ENCODE measurements at regions of chr6 and their contacts with region 1.

Region 1: GRCh38 chr6:38671885-38672467 is 31.0 kb downstream of the GLO1 start:
- DNase-seq: peak; percentile 75
- CTCF ChIP-seq: peak; percentile 58

Region 2: DNA sequence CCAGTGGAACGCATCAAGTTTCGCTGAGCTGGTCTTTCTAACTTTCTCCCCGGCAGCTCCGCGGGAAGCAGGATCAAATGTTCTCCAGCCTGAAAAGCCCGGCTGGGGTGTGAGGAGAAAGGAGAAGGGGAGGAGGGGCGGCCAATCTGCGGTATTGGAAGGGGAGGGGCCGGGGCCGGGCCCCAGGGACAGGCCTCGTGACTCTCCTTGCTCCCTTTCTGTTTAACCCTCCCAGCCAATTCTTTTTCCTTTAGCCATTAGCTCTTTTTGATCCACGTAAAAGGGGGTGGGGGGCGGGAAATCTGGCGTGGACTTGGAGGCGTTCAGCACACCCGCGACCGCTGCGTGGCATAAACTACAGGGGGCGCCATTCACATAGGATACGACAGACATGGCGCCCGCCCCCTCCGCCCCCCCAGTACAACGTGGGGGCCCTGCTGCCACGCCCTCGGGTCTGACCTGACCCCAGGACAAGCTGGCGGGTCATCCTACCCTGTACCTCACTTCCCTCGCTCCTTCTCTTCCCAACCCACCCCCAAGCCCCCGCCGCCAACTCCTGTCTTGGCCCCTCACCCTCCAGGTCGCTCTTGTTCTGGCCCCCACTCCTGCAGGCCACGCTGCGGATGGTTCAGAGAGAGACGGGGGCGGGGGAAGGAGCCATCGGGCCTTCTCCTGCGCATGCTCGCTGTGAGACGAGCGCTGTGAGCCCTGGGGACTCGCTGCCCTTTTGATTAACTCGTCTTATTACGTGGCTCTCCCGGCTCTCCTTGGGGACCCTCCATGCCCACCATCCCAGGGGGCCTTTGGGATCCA is 966.5 kb before region 1 on chr6:
- in situ Hi-C with region 1: loop called (anchors 25 kb)
- DNase-seq: peak; percentile 91
- CTCF ChIP-seq: peak; percentile 79

Region 3: DNA sequence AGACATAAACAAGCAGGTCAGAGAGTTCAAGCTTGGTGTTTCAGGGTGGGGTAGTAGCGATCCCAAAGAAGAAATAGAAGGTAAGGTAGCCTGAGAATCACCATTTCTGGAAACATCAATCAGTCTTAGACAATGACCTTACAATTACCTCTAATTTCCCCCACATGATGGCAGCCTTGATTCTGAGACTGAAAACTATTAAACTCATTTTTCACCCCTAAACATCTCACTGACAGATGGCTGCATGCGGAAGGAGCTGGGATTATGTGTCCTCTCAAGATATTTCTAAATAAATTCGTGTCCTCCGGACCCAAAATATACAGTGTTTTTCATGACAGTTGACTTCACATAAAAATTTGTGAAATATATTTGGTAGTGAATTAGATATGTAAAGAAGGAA is 992.2 kb after region 1 on chr6:
- in situ Hi-C with region 1: no loop called
- DNase-seq: no peak
- CTCF ChIP-seq: no peak

Measured in GM13976 (cell line).